Calu3 (cell line): ENCODE measurements at regions of chr1 and their contacts with region 1.

Region 1: DNA sequence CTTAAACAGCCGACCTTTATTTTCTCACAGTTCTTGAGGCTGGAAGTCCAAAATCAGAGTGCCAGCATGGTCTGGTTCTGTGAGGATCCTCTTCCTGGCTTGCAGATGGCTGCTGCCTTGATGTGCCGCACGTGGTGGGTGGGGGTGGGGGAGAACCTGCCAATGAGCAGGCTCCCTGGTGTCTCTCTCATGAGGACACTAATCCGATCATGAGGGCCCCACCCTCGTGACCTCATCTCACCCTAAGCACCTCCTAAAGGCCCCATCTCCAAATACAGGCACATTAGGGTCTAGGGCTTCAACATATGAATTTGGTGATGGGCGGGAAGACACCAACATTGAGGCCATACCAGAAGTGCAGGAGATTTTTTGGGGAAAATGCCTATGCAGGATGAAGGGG is 37.8 kb downstream of the ACTN2 start:
- DNase-seq: no peak
- H3K4me3 Mint-ChIP-seq: no peak overlapping the region
- H3K27ac Mint-ChIP-seq: no peak overlapping the region
- H3K4me1 Mint-ChIP-seq: no peaks in the 10 kb centered on the region
- H3K27me3 Mint-ChIP-seq: no peaks in the 10 kb centered on the region
- CTCF ChIP-seq: no peak

Region 2: DNA sequence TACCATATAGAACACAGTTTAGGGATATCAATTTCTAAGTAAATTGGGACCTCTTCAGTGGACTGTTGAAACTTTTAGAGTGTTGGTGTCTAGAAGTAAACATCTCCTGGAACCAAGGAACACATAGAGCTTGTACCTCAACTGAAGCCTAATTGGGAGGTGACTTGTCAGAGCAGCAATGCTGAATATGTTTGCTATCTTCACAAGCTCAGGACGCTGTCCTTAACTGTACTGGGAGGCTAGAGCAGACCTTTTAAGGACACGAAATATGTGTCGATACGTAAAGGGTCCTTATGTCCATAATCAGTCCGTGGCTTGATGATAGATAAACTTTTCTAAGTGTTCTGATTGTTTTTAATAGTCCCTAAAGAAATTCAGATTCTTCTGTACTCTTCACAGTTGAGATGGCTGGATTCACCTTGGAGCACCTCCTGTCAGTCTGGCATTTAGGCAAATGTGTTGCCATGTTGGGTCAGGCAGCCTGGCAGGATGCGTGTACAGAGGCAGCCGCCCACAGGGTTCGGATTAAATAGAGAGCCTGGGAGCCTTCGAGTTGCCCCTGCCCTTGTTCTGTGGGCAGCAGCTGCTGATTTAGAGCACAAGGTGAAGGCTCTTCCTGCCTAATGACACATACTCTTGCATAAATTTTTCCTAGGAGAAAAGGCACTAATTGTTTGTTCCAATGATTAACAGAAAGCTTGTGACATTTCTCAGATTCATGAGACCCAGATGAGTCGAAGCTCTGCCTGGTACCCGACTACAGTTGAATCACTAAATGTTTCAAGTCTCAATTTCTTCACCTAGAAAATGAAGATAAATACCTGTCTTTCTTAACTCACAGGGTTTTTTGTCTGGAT is 34.1 kb before region 1 on chr1:
- CTCF ChIA-PET with region 1: interaction called, 10 read pairs
- intact Hi-C with region 1: no loop called
- DNase-seq: no peak
- H3K4me3 Mint-ChIP-seq: no peak overlapping the region
- H3K27ac Mint-ChIP-seq: no peak overlapping the region
- H3K4me1 Mint-ChIP-seq: no peaks in the 10 kb centered on the region
- H3K27me3 Mint-ChIP-seq: peaks cover 9% of the 10 kb centered on the region
- CTCF ChIP-seq: no peak

Region 3: GRCh38 chr1:236888903-236889302 is 164.9 kb after region 1 on chr1:
- CTCF ChIA-PET with region 1: no interaction called
- intact Hi-C with region 1: no loop called
- DNase-seq: no peak
- H3K4me3 Mint-ChIP-seq: no peak overlapping the region
- H3K27ac Mint-ChIP-seq: no peak overlapping the region
- H3K4me1 Mint-ChIP-seq: no peaks in the 10 kb centered on the region
- H3K27me3 Mint-ChIP-seq: no peaks in the 10 kb centered on the region
- CTCF ChIP-seq: no peak

Region 4: GRCh38 chr1:237249120-237249519 is 525.1 kb after region 1 on chr1:
- CTCF ChIA-PET with region 1: no interaction called
- intact Hi-C with region 1: no loop called
- DNase-seq: no peak
- H3K4me3 Mint-ChIP-seq: no peak overlapping the region
- H3K27ac Mint-ChIP-seq: no peak overlapping the region
- H3K4me1 Mint-ChIP-seq: no peaks in the 10 kb centered on the region
- H3K27me3 Mint-ChIP-seq: no peaks in the 10 kb centered on the region
- CTCF ChIP-seq: no peak